Activated CD8-positive, alpha-beta T cell treated with anti-CD3 and anti-CD28 coated beads, Interleukin-2, amount 10 ng/mL, durations not matched to agents 7 days and 5 days (primary cell): ENCODE measurements at regions of chr11 and their contacts with region 1.

Region 1: DNA sequence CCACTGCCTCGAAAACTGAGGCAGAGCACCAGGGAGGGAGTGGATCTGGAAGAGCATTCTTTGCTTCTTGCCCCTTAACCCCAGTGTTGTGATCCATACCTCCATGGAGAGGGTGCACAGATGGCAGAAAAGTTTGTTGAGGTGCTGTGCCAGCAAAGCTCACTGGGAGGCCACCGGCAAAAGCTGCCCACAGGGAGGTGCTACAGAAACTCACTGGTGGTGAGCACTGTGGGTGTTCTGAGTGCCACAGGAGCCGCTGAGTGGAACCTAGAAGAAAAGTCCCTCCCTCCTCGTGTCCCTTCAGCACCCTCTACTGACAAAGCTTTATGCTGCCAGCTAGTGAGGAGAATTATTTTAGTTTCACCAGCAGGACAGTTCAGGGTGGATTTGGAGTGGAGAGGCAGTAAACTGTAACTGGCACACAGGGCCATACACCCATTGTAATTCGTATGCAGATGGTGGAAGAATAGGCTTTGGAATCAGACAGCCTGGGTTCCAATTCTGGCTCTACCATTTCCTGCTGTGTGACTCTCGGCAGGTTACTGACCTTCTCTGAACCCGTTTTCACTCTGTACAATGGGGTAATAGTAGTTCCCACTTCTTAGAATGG is 84.6 kb downstream of the SWAP70 start:
- DNase-seq: peak; percentile 84
- ATAC-seq: peak; percentile 99
- H3K4me3 Mint-ChIP-seq: no peak overlapping the region
- H3K27ac Mint-ChIP-seq: no peak overlapping the region
- H3K4me1 Mint-ChIP-seq: peaks cover 21% of the 10 kb centered on the region
- H3K27me3 Mint-ChIP-seq: no peaks in the 10 kb centered on the region

Region 2: DNA sequence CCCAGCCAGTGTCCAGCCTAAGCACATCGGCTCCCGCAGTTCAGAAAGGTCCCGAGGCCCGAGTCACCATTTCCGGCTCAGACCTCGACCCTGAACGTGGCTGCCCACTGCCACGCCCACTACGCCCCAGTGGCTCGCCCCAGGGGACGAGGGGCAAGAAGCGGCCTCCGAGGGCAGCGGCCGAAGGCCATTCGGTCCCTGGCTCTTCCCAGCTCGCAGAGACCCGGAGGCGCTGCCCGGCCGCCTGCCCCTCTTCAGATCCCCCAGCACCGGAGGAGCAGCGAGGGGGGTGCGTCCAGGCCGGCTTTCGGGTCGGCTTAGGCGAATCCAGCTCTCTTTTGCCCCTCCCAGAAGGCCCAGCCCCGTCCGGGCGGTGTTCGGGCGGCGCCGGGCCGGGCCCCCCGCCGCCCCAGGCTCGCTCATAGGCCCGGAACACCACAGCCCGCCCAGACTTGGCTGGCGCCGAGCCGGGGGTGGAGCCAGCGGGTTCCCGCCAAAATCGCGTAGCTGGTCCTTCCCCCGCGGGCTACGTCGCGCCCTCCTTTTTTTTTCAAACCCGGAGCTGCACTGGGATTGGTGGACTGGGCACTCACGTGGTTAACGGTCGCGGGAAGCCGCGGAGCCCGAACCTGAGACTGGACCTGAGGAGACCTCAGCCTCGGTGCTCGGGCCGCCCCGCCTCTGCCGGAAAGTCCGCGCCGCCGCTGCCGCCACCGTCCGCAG is 175.3 kb before region 1 on chr11 and contains the start of gene WEE1:
- CTCF ChIA-PET with region 1: interaction called, 11 read pairs
- POLR2A ChIA-PET with region 1: no interaction called
- DNase-seq: peak; percentile 98
- ATAC-seq: peak; percentile 96
- H3K4me3 Mint-ChIP-seq: peak within 1 kb of the TSS; percentile 98
- H3K27ac Mint-ChIP-seq: peak within 1 kb of the TSS; percentile 87
- H3K4me1 Mint-ChIP-seq: peaks cover 46% of the 10 kb centered on the region
- H3K27me3 Mint-ChIP-seq: peaks cover 14% of the 10 kb centered on the region
- total RNA-seq, gene WEE1: 73.3 to 75.1 TPM

Region 3: GRCh38 chr11:9601037-9601875 is 147.2 kb before region 1 on chr11:
- CTCF ChIA-PET with region 1: interaction called, 16 read pairs
- POLR2A ChIA-PET with region 1: no interaction called
- DNase-seq: peak; percentile 89
- ATAC-seq: peak; percentile 92
- H3K4me3 Mint-ChIP-seq: peak overlapping the region; percentile 72
- H3K27ac Mint-ChIP-seq: peak overlapping the region; percentile 71
- H3K4me1 Mint-ChIP-seq: peaks cover 31% of the 10 kb centered on the region
- H3K27me3 Mint-ChIP-seq: peaks cover 11% of the 10 kb centered on the region

Region 4: DNA sequence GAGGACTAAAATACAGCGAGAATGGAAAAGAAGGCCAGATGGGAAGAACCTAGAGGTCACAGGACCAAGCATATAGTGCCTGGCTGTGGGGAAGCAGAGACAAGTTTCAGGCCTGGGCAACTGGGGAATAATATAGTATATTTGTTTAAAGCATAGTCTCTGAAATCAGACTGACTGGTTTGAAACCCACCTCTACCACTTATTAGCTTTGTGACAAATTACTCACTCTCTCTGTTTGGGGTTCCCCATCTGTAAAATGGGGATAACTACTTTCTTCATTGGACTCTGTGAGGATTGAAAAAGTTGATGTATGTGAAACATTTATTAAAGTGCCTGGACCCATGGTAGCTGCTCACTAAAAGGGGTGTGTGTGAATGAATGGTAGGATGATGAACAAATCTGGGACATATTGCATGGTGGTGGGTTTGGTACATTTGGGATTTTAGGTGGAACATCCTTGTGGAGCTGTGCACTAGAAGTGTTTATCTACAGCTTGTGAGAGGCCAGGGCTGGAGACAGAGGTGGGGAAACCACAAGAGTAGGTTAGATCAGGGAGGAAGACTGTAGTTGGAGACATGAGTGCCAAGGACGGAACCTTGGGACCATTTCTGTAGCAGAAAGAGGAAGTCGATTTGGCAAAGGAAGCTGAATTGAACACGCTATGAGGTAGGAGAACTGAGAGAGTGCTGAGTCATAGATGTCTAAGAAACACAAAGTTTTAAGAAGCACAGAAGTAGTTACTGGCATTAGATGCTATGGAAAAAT is 32.0 kb before region 1 on chr11:
- CTCF ChIA-PET with region 1: interaction called, 12 read pairs
- POLR2A ChIA-PET with region 1: no interaction called
- DNase-seq: no peak
- ATAC-seq: no peak
- H3K4me3 Mint-ChIP-seq: no peak overlapping the region
- H3K27ac Mint-ChIP-seq: peak overlapping the region; percentile 2
- H3K4me1 Mint-ChIP-seq: peaks cover 21% of the 10 kb centered on the region
- H3K27me3 Mint-ChIP-seq: peaks cover 3% of the 10 kb centered on the region

Region 5: GRCh38 chr11:9774591-9775397 is 26.3 kb after region 1 on chr11:
- CTCF ChIA-PET with region 1: no interaction called
- POLR2A ChIA-PET with region 1: no interaction called
- DNase-seq: no peak
- ATAC-seq: no peak
- H3K4me3 Mint-ChIP-seq: no peak overlapping the region
- H3K27ac Mint-ChIP-seq: no peak overlapping the region
- H3K4me1 Mint-ChIP-seq: no peaks in the 10 kb centered on the region
- H3K27me3 Mint-ChIP-seq: no peaks in the 10 kb centered on the region

Region 6: GRCh38 chr11:9815486-9816136 is 67.1 kb after region 1 on chr11:
- CTCF ChIA-PET with region 1: no interaction called
- POLR2A ChIA-PET with region 1: no interaction called
- DNase-seq: no peak
- ATAC-seq: no peak
- H3K4me3 Mint-ChIP-seq: no peak overlapping the region
- H3K27ac Mint-ChIP-seq: no peak overlapping the region
- H3K4me1 Mint-ChIP-seq: no peaks in the 10 kb centered on the region
- H3K27me3 Mint-ChIP-seq: no peaks in the 10 kb centered on the region

Region 7: DNA sequence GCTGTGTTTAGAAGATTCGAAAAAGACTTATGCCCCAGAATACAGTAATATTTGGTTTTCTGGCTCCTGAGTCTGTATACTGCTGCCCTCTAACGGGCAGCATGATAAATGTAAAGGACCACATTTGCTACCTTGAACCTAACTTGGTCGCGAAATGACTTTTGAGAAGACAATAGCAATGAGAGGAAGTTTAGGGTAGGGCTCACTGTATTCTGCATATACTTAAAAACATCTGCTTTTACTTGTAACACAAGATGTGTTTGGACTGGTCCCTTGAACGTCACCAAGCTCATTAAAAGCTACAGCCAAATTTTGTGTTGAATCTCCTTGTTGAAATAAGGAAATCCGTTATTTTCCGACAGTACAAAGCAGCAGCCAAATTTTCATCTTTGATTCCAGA is 224.5 kb after region 1 on chr11:
- CTCF ChIA-PET with region 1: interaction called, 14 read pairs
- POLR2A ChIA-PET with region 1: no interaction called
- DNase-seq: peak; percentile 44
- ATAC-seq: peak; percentile 60
- H3K4me3 Mint-ChIP-seq: no peak overlapping the region
- H3K27ac Mint-ChIP-seq: no peak overlapping the region
- H3K4me1 Mint-ChIP-seq: peaks cover 3% of the 10 kb centered on the region
- H3K27me3 Mint-ChIP-seq: no peaks in the 10 kb centered on the region